ENCODE measurements at regions of chr6 and their contacts with region 1.

Region 1: DNA sequence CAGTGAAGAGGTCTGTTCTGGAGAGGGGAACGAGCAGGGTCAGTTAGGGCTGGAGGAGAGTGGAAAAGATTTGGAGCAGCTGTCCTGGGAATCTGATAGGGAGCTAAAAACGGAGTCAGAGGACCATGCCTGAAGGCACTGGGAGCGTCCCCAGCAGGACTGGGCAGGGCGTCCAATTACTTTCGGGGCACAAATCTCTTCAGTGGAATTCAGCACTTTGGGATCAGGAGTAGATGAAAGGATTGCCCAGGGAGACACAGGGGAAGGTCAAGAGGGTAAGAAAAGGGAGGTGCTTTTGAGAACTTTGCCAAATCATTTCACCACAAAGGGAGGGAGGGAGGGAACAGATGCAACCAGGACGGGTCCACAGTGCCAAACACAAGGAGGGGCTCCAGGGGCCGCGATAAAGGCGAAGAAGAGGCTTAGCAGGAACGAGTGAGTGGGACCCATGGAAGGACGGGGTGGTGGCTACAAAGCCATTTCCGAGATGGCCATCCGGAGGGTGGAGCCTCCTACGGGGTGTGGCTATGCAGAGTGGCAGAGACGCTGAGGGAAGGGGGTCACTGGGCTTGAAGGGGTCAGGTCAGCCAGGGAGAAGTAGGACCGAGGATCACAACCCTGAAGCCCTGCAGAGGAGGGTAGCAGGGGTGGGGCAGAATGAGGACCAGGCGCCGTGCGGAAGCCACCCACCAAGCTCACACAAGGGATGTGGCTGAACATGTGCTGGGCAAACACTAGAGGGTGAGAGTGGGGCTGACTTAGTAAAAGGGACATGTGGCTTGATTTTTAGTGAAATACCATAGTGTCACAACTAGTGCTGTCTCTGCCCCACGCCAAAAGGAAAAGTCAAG is 180.0 kb upstream of the RREB1 start:
- DNase-seq: no peak
- H3K4me3 ChIP-seq: no peak overlapping the region
- H3K27ac ChIP-seq: no peak overlapping the region
- H3K4me1 ChIP-seq: no peaks in the 10 kb centered on the region
- H3K27me3 ChIP-seq: no peaks in the 10 kb centered on the region
- CTCF ChIP-seq: no peak

Region 2: DNA sequence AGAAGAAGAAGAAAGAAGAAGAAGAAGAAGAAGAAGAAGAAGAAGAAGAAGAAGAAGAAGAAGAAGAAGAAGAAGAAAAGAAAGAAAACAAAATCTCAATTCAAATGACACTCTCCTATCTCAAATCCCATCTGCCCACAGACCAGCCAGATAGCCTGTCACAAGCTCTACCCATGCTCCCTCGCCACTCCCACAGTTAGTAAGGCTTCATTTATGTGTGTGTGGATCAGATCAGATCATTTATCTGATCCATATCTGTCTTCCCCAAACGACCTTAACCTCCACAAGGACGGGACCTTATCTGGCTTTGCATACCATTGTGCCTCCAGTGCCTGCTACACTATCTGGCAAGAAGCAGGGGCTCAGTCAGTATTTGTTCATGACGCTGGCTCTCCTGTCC is 98.1 kb after region 1 on chr6:
- CTCF ChIA-PET with region 1: no interaction called
- dilution Hi-C with region 1: loop called (anchors 5 kb)
- in situ Hi-C with region 1: no loop called
- intact Hi-C with region 1: no loop called
- DNase-seq: no peak
- H3K4me3 ChIP-seq: no peak overlapping the region
- H3K27ac ChIP-seq: no peak overlapping the region
- H3K4me1 ChIP-seq: no peaks in the 10 kb centered on the region
- H3K27me3 ChIP-seq: no peaks in the 10 kb centered on the region
- CTCF ChIP-seq: no peak